Naive thymus-derived CD4-positive, alpha-beta T cell (primary cell): ENCODE measurements at regions of chr7 and their contacts with region 1.

Region 1: DNA sequence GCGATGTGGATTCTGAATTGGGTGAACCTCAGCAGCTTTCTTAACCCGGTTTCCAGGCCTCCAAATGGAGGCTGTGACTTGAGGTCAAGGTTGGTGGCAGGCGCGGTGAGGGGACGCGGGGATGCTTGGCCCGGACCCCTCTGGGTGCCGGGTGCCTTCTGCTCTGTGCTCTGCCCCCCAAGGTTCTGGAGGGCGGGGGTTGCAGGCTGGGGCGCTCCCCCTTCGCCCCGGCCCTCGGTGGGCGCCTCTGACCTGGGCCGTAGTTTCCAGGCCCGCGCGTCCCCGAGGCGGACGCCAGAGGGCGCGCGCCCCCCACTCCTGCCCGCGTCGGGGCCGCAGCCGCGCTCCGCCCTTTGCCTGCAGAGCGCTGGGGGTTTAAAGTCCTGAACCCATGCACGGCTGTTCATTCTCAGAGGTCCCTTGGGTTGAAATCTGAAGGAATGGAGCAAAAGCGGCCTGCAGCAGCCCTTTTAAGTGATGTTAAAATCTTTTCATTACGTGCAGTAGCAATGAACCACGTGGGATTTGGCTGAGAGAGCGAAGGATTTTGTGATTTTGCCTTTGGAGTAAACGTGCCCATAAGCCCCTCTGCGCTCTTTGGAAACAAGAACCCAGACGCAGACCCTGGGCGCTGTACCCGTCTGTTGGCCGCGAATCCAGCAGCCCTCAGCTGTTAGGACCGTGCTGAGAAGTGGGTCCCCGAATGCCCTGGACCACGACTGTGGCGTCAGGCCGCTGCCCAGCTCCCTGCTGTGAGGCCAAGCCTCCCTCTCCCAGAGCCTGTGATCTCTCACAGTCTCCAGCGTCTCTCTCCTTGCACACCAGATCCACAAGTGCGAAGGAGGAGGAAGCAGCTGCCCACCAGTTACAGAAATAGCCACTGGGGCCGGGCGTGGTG is 135.0 kb downstream of the ACTR3B start:
- DNase-seq: peak in 2 of 9 donors; percentile 12 to 38
- ATAC-seq: peak; percentile 56
- H3K4me3 ChIP-seq: no peak overlapping the region
- H3K4me3 Mint-ChIP-seq: no peak overlapping the region
- H3K27ac ChIP-seq: no peak overlapping the region
- H3K27ac Mint-ChIP-seq: no peak overlapping the region
- H3K4me1 ChIP-seq: no peaks in the 10 kb centered on the region
- H3K4me1 Mint-ChIP-seq: peaks cover 0 to 3% (median 0%) of the 10 kb centered on the region in 7 donors
- H3K27me3 ChIP-seq: no peaks in the 10 kb centered on the region
- H3K27me3 Mint-ChIP-seq: peaks cover 0 to 12% (median 7%) of the 10 kb centered on the region in 5 donors

Region 2: DNA sequence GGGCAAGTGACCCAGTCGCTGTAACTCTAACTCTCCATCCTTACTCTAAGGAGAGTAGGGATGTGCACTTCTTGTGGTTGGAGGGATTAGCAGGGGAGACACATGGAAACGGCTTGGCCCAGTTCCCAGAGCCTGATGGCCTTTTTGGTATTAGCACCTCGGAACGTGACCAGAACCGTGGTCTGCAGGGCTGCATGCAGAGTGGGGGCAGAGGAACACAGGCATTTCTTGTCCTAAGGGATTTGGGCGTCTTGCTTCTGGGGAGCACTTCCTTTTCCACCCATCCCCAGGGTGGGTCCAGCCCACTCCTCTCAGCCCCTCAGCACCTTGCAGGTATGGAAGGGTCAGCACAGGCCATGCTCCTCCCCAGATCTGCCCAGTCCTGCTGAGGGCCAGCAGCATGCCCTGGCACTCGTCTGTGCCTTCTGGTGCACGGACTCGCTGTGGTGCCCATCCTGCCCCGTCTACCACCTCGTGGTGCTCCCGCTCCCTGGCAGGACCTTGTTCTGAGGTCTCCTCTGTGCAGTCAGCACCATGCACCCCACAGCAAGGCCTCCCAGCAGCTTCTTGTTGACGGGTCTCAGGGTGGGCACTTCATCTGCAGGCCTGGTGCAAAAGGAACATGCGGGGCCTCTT is 25.4 kb before region 1 on chr7:
- CTCF ChIA-PET with region 1: no interaction called
- POLR2A ChIA-PET with region 1: no interaction called
- intact Hi-C with region 1: no loop called
- DNase-seq: no peak
- ATAC-seq: no peak
- H3K4me3 ChIP-seq: no peak overlapping the region
- H3K4me3 Mint-ChIP-seq: no peak overlapping the region
- H3K27ac ChIP-seq: no peak overlapping the region
- H3K27ac Mint-ChIP-seq: no peak overlapping the region
- H3K4me1 ChIP-seq: no peaks in the 10 kb centered on the region
- H3K4me1 Mint-ChIP-seq: peaks cover 0 to 2% (median 0%) of the 10 kb centered on the region in 7 donors
- H3K27me3 ChIP-seq: no peaks in the 10 kb centered on the region
- H3K27me3 Mint-ChIP-seq: no peaks in the 10 kb centered on the region

Region 3: GRCh38 chr7:154503962-154504550 is 1609.5 kb after region 1 on chr7:
- CTCF ChIA-PET with region 1: no interaction called
- POLR2A ChIA-PET with region 1: no interaction called
- intact Hi-C with region 1: loop called (anchors 10 kb)
- DNase-seq: peak in 3 of 9 donors; percentile 1 to 22 (median 3)
- ATAC-seq: no peak
- H3K4me3 ChIP-seq: no peak overlapping the region
- H3K4me3 Mint-ChIP-seq: no peak overlapping the region
- H3K27ac ChIP-seq: no peak overlapping the region
- H3K27ac Mint-ChIP-seq: no peak overlapping the region
- H3K4me1 ChIP-seq: no peaks in the 10 kb centered on the region
- H3K4me1 Mint-ChIP-seq: no peaks in the 10 kb centered on the region
- H3K27me3 ChIP-seq: no peaks in the 10 kb centered on the region
- H3K27me3 Mint-ChIP-seq: peaks cover 0 to 5% (median 0%) of the 10 kb centered on the region in 5 donors